ENCODE measurements at regions of chr2 and their contacts with region 1.

Region 1: GRCh38 chr2:196068271-196069209 is at the start of gene DNAH7:
- H3K4me3 ChIP-seq: peak within 1 kb of the TSS; percentile 96
- H3K27ac ChIP-seq: no peak within 1 kb of the TSS; the same call in 1 of the 2 replicates
- H3K4me1 ChIP-seq: no peaks in the 10 kb centered on the region
- CTCF ChIP-seq: peak; percentile 96

Region 2: DNA sequence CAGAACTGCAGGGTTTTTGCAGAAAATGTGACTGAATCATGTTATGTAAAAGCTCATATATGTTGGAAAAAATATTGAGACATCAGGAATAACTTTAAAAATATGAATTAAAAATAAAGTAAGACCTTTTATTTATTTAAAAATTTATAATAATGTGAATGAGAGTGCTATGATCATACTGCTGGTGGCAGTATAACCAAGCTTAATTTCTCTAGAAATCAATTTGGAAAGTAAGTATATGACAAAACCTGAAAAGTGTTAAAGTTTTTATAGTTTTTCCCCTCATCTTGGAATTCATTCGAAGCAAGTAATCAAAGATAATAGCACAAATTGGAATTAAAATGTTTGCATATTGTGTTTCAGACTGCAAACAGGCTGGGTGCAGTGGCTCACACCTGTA is 404.0 kb before region 1 on chr2:
- CTCF ChIA-PET with region 1: interaction called, 11 read pairs
- POLR2A ChIA-PET with region 1: no interaction called
- H3K4me3 ChIP-seq: no peak overlapping the region
- H3K27ac ChIP-seq: no peak overlapping the region
- H3K4me1 ChIP-seq: peaks cover 3% of the 10 kb centered on the region; the same call in 1 of the 2 replicates
- CTCF ChIP-seq: no peak

Region 3: GRCh38 chr2:196054631-196055030 is 13.9 kb before region 1 on chr2:
- CTCF ChIA-PET with region 1: interaction called, 15 read pairs
- POLR2A ChIA-PET with region 1: no interaction called
- H3K4me3 ChIP-seq: no peak overlapping the region
- H3K27ac ChIP-seq: no peak overlapping the region
- H3K4me1 ChIP-seq: no peaks in the 10 kb centered on the region
- CTCF ChIP-seq: no peak

Region 4: GRCh38 chr2:196225213-196225612 is 156.7 kb after region 1 on chr2:
- CTCF ChIA-PET with region 1: no interaction called
- POLR2A ChIA-PET with region 1: no interaction called
- H3K4me3 ChIP-seq: no peak overlapping the region
- H3K27ac ChIP-seq: no peak overlapping the region
- H3K4me1 ChIP-seq: no peaks in the 10 kb centered on the region
- CTCF ChIP-seq: no peak

Measured in HEK293 (cell line).